Activated CD4-positive, alpha-beta T cell treated with anti-CD3 and anti-CD28 coated beads for 36 hours (primary cell): ENCODE measurements at regions of chr6 and their contacts with region 1.

Region 1: DNA sequence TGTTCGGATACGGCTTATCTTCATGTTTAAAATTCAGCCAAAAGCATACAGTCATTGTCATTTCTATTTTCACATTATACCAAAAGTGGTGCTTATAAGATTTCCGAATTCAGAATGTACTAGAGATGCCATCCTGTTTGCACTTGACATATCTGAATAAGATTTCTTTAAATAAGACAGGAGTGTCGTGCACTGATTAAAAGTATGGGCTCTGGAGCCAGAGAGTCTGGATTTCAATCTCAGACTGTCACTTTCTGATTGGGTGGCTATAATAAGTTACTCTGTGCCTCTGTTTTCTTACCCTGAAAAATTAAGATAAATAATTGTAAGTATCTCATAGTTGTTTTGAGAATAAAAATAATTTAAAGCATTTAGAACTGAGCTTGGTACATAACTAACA is 92.8 kb downstream of the RWDD2A start:
- DNase-seq: no peak
- ATAC-seq: no peak
- H3K4me3 Mint-ChIP-seq: no peak overlapping the region
- H3K27ac Mint-ChIP-seq: no peak overlapping the region
- H3K4me1 Mint-ChIP-seq: no peaks in the 10 kb centered on the region
- H3K27me3 Mint-ChIP-seq: peaks cover 27% of the 10 kb centered on the region

Region 2: GRCh38 chr6:83352424-83353061 is 66.6 kb after region 1 on chr6:
- CTCF ChIA-PET with region 1: no interaction called
- POLR2A ChIA-PET with region 1: no interaction called
- intact Hi-C with region 1: loop called in 1 of 2 experiments (anchors 2 kb)
- DNase-seq: no peak
- ATAC-seq: no peak
- H3K4me3 Mint-ChIP-seq: no peak overlapping the region
- H3K27ac Mint-ChIP-seq: no peak overlapping the region
- H3K4me1 Mint-ChIP-seq: no peaks in the 10 kb centered on the region
- H3K27me3 Mint-ChIP-seq: peaks cover 2% of the 10 kb centered on the region